HepG2 (cell line): ENCODE measurements at regions of chr12 and their contacts with region 1.

Region 1: GRCh38 chr12:65923228-65923627 is 98.9 kb downstream of the HMGA2 start:
- DNase-seq: no peak
- ATAC-seq: peak; percentile 28; the same call in 2 of the 3 replicates
- H3K4me3 ChIP-seq: no peak overlapping the region
- H3K27ac ChIP-seq: peak overlapping the region; percentile 24
- H3K4me1 ChIP-seq: peaks cover 62% of the 10 kb centered on the region
- H3K27me3 ChIP-seq: no peaks in the 10 kb centered on the region
- CTCF ChIP-seq: no peak
- EP300 ChIP-seq: no peak
- POLR2A ChIP-seq: no peak
- RAD21 ChIP-seq: no peak

Region 2: GRCh38 chr12:65853489-65854370 is 69.5 kb before region 1 on chr12:
- CTCF ChIA-PET with region 1: no interaction called
- POLR2A ChIA-PET with region 1: no interaction called
- in situ Hi-C with region 1: no loop called
- intact Hi-C with region 1: no loop called
- DNase-seq: no peak
- ATAC-seq: no peak
- H3K4me3 ChIP-seq: no peak overlapping the region
- H3K27ac ChIP-seq: no peak overlapping the region
- H3K4me1 ChIP-seq: peaks cover 67% of the 10 kb centered on the region
- H3K27me3 ChIP-seq: no peaks in the 10 kb centered on the region; a peak in 1 of 5 replicates
- CTCF ChIP-seq: no peak
- EP300 ChIP-seq: no peak
- POLR2A ChIP-seq: no peak
- RAD21 ChIP-seq: no peak

Region 3: DNA sequence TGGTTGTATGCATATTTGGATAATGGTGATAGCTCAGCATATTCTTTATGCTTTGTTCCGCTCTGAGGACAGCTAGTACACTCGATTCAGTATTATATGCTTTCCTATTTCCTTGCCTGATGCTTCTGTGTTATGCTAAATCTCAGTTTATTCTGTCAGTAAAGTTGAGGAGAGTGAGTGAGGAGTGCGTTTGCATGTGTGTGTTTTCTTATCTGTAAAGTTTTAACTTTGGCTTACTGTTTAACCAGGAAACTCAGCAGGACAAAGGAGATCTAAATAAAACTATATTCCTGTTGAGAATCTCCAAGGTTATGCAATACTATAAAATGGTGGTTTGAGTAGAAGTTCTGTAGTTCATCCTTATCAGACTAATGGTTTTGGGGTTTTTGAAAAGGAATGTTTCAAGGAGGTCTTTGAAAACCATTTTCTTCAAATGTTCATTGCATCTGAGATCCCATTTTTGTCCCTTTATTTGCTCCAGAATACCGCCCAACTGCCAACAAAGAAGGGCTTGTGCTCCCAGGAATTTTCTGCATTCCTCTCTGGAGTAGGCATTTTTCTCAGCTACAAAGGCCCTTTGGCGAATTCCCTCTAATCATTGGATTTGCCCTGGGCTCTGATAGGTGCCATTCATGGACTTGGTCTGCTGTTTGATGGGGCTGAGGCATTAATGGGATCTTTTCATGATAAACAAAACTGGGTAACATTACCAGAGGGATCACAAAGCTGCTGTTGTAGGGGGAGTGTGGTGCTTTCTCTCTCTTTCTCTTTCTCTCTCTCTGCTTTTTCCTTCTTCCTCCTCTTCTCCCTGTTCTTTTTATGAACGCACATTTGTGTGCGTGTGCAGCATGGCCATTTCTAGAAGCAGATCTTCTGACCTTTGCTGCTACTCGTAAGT is 27.2 kb before region 1 on chr12:
- CTCF ChIA-PET with region 1: no interaction called
- POLR2A ChIA-PET with region 1: interaction called, 15 read pairs
- in situ Hi-C with region 1: no loop called
- intact Hi-C with region 1: no loop called
- DNase-seq: peak; percentile 97
- ATAC-seq: peak; percentile 96
- H3K4me3 ChIP-seq: peak overlapping the region; percentile 15 to 60 (median 53); a peak in 5 of 6 replicates
- H3K27ac ChIP-seq: peak overlapping the region; percentile 92
- H3K4me1 ChIP-seq: peaks cover 91% of the 10 kb centered on the region
- H3K27me3 ChIP-seq: no peaks in the 10 kb centered on the region
- CTCF ChIP-seq: no peak
- EP300 ChIP-seq: no peak; a peak in 1 of 4 replicates
- POLR2A ChIP-seq: peak; percentile 56 to 63; a peak in 3 of 4 replicates
- RAD21 ChIP-seq: no peak

Region 4: GRCh38 chr12:65937161-65937641 is 14.0 kb after region 1 on chr12:
- CTCF ChIA-PET with region 1: no interaction called
- POLR2A ChIA-PET with region 1: interaction called, 24 read pairs
- in situ Hi-C with region 1: no loop called
- intact Hi-C with region 1: no loop called
- DNase-seq: peak; percentile 97
- ATAC-seq: peak; percentile 98
- H3K4me3 ChIP-seq: no peak overlapping the region; a peak in 1 of 6 replicates
- H3K27ac ChIP-seq: peak overlapping the region; percentile 70
- H3K4me1 ChIP-seq: peaks cover 85% of the 10 kb centered on the region
- H3K27me3 ChIP-seq: no peaks in the 10 kb centered on the region
- CTCF ChIP-seq: 0 out of 2 replicates have a peak, but pooled peaks have one; percentile 2
- EP300 ChIP-seq: peak in 1 of 2 experiments; percentile 77; a peak in 2 of 4 replicates
- POLR2A ChIP-seq: no peak
- RAD21 ChIP-seq: no peak

Region 5: DNA sequence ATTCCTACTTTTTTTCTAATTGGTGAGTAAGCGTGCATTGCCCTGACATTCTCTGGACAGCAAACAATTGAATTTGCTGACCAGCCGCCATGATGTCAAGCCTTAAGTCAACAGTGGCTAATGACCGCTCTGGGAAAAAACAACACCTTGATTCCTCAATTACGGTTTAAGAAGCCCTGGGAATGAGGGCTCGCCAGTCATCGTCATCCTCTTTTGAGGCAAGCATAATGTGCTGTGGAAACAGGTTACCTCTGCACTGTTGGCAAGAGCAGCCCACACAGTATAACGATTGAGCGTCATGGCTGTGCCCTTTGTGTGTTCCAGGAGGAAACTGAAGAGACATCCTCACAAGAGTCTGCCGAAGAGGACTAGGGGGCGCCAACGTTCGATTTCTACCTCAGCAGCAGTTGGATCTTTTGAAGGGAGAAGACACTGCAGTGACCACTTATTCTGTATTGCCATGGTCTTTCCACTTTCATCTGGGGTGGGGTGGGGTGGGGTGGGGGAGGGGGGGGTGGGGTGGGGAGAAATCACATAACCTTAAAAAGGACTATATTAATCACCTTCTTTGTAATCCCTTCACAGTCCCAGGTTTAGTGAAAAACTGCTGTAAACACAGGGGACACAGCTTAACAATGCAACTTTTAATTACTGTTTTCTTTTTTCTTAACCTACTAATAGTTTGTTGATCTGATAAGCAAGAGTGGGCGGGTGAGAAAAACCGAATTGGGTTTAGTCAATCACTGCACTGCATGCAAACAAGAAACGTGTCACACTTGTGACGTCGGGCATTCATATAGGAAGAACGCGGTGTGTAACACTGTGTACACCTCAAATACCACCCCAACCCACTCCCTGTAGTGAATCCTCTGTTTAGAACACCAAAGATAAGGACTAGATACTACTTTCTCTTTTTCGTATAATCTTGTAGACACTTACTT is 40.0 kb after region 1 on chr12:
- CTCF ChIA-PET with region 1: no interaction called
- POLR2A ChIA-PET with region 1: interaction called, 5 read pairs
- in situ Hi-C with region 1: no loop called
- intact Hi-C with region 1: loop called (anchors 5 kb)
- DNase-seq: no peak
- ATAC-seq: no peak
- H3K4me3 ChIP-seq: no peak overlapping the region
- H3K27ac ChIP-seq: no peak overlapping the region
- H3K4me1 ChIP-seq: peaks cover 48% of the 10 kb centered on the region
- H3K27me3 ChIP-seq: no peaks in the 10 kb centered on the region
- CTCF ChIP-seq: peak; percentile 43
- EP300 ChIP-seq: no peak
- POLR2A ChIP-seq: no peak
- RAD21 ChIP-seq: no peak

Region 6: DNA sequence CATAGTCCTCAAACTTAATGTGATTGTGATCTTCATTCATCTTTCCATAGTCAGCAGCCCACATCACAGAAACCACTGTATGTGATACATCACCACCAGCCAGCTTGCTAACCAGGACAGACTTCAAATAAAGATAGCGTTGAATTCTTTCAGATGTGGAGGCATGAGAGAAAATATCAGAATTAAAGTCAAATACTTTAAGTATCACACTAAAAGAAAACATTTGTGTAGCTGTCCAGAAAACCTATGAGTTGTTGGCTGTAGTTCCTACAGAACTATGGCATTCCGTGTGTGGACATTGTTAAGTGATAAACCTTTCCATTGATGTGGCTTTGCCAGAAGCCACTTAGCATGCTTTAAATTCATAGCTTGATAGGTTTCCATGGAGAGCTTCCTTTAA is 102.2 kb after region 1 on chr12:
- CTCF ChIA-PET with region 1: no interaction called
- POLR2A ChIA-PET with region 1: no interaction called
- in situ Hi-C with region 1: no loop called
- intact Hi-C with region 1: no loop called
- DNase-seq: peak; percentile 49
- ATAC-seq: no peak
- H3K4me3 ChIP-seq: no peak overlapping the region
- H3K27ac ChIP-seq: no peak overlapping the region
- H3K4me1 ChIP-seq: no peaks in the 10 kb centered on the region
- H3K27me3 ChIP-seq: no peaks in the 10 kb centered on the region
- CTCF ChIP-seq: no peak
- EP300 ChIP-seq: no peak
- POLR2A ChIP-seq: no peak
- RAD21 ChIP-seq: no peak